Gastrocnemius medialis (tissue), 4 donors: ENCODE measurements at regions of chr14 and their contacts with region 1.

Region 1: GRCh38 chr14:102917469-102918211 is 4.8 kb upstream of the AMN start:
- DNase-seq: peak in 1 of 2 donors; percentile 30
- ATAC-seq: peak in 1 of 2 donors; percentile 24
- H3K4me3 ChIP-seq: no peak overlapping the region
- H3K27ac ChIP-seq: no peak overlapping the region
- H3K4me1 ChIP-seq: no peaks in the 10 kb centered on the region
- H3K27me3 ChIP-seq: peaks cover 7 to 16% (median 12%) of the 10 kb centered on the region in 3 donors
- CTCF ChIP-seq: peak; percentile 51 to 67 (median 55)
- POLR2A ChIP-seq: no peak

Region 2: GRCh38 chr14:102524466-102525218 is 393.0 kb before region 1 on chr14:
- in situ Hi-C with region 1: no loop called
- intact Hi-C with region 1: loop called (anchors 10 kb)
- DNase-seq: peak; percentile 93 to 96
- ATAC-seq: peak; percentile 94 to 95
- H3K4me3 ChIP-seq: peak overlapping the region; percentile 69 to 77 (median 72)
- H3K27ac ChIP-seq: peak overlapping the region; percentile 68 to 78 (median 75)
- H3K4me1 ChIP-seq: peaks cover 11 to 12% of the 10 kb centered on the region in 2 donors
- H3K27me3 ChIP-seq: no peaks in the 10 kb centered on the region
- CTCF ChIP-seq: peak; percentile 94 to 97 (median 95)
- POLR2A ChIP-seq: peak in 1 of 2 donors; percentile 16

Region 3: GRCh38 chr14:102694530-102695166 is 223.0 kb before region 1 on chr14:
- in situ Hi-C with region 1: loop called in 2 of 4 experiments (anchors 25 kb)
- intact Hi-C with region 1: loop called (anchors 1 kb)
- DNase-seq: peak; percentile 40 to 41
- ATAC-seq: peak; percentile 46 to 75
- H3K4me3 ChIP-seq: no peak overlapping the region
- H3K27ac ChIP-seq: no peak overlapping the region
- H3K4me1 ChIP-seq: peaks cover 49 to 51% of the 10 kb centered on the region in 2 donors
- H3K27me3 ChIP-seq: no peaks in the 10 kb centered on the region
- CTCF ChIP-seq: peak; percentile 55 to 75 (median 68)
- POLR2A ChIP-seq: no peak

Region 4: DNA sequence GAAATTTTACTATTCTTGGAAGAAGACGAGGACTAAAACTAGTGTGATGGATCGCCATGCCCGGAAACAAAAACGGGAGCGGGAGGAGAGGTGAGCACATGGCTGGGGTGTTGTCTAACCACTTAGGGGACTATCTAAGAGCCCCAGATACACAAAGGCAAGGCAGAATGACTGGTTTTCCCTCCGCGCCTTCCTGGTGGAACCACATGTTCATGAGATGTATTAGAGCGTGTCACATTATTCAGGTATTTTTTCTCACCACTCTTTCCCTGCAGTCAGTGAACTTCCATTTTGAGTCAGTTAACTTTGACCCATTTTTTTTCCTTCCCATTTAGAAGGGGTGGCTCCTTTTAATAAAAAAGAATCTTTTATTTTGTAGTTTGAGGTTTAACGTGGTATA is 209.1 kb before region 1 on chr14:
- in situ Hi-C with region 1: loop called in 1 of 4 experiments (anchors 10 kb)
- intact Hi-C with region 1: no loop called
- DNase-seq: no peak
- ATAC-seq: no peak
- H3K4me3 ChIP-seq: no peak overlapping the region
- H3K27ac ChIP-seq: no peak overlapping the region
- H3K4me1 ChIP-seq: no peaks in the 10 kb centered on the region
- H3K27me3 ChIP-seq: no peaks in the 10 kb centered on the region
- CTCF ChIP-seq: no peak
- POLR2A ChIP-seq: no peak

Region 5: GRCh38 chr14:102774391-102775153 is 143.1 kb before region 1 on chr14:
- in situ Hi-C with region 1: loop called in 1 of 4 experiments (anchors 10 kb)
- intact Hi-C with region 1: loop called (anchors 1 kb)
- DNase-seq: peak; percentile 33 to 43
- ATAC-seq: peak; percentile 37 to 52
- H3K4me3 ChIP-seq: no peak overlapping the region
- H3K27ac ChIP-seq: no peak overlapping the region
- H3K4me1 ChIP-seq: peaks cover 5 to 6% of the 10 kb centered on the region in 2 donors
- H3K27me3 ChIP-seq: no peaks in the 10 kb centered on the region
- CTCF ChIP-seq: peak; percentile 33 to 70 (median 53)
- POLR2A ChIP-seq: no peak